Adrenal gland (tissue), 19 donors: ENCODE measurements at regions of chr1 and their contacts with region 1.

Region 1: GRCh38 chr1:46132529-46133180 is at the start of gene PIK3R3:
- DNase-seq: peak; percentile 98 to 99 (median 99)
- H3K4me3 ChIP-seq: peak within 1 kb of the TSS in 3 of 4 donors; percentile 69 to 77 (median 75)
- H3K27ac ChIP-seq: peak within 1 kb of the TSS; percentile 95 to 98 (median 97)
- H3K4me1 ChIP-seq: peaks cover 24 to 49% of the 10 kb centered on the region in 2 donors
- H3K27me3 ChIP-seq: no peaks in the 10 kb centered on the region
- CTCF ChIP-seq: peak in 3 of 6 experiments; percentile 20 to 25 (median 22)
- POLR2A ChIP-seq: peak; percentile 99 to 100
- total RNA-seq, gene PIK3R3: 6.5 to 47.3 (median 21.5) TPM

Region 2: DNA sequence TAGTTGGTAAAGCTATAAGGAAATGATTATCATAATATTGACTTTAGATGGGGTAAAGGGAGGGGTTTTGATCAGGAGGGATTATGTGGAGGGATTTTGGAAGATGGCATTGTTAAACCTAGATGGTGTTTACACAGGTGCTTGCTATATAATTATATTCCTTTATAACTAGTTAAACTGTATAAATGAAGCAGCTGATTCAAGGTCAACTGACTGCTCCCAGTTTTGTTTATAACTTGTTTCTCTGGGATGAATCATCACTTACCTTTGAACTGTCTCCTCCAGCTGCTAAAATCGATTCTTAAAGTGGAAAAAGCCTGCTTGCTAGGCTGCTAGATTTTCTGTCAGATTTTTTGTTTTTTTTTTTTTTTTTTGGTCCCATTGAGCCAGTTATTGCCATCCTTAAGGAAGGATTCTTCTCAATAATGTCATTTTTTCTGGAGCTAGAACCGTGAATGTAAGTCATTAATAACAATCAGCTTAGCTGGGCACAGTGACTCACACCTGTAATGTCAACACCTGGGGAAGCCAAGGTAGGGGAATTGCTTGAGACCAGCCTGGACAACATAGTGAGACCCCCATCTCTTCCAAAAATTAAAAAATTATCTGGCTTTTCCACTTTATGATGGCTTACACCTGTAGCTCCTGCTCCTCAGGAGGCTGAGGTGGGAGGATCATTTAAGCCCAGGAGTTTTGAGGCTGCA is 153.4 kb before region 1 on chr1:
- intact Hi-C with region 1: no loop called
- DNase-seq: no peak
- H3K4me3 ChIP-seq: no peak overlapping the region
- H3K27ac ChIP-seq: peak overlapping the region in 3 of 5 donors; percentile 16 to 47 (median 42)
- H3K4me1 ChIP-seq: peaks cover 0 to 7% of the 10 kb centered on the region in 2 donors
- H3K27me3 ChIP-seq: no peaks in the 10 kb centered on the region
- CTCF ChIP-seq: no peak
- POLR2A ChIP-seq: no peak

Region 3: DNA sequence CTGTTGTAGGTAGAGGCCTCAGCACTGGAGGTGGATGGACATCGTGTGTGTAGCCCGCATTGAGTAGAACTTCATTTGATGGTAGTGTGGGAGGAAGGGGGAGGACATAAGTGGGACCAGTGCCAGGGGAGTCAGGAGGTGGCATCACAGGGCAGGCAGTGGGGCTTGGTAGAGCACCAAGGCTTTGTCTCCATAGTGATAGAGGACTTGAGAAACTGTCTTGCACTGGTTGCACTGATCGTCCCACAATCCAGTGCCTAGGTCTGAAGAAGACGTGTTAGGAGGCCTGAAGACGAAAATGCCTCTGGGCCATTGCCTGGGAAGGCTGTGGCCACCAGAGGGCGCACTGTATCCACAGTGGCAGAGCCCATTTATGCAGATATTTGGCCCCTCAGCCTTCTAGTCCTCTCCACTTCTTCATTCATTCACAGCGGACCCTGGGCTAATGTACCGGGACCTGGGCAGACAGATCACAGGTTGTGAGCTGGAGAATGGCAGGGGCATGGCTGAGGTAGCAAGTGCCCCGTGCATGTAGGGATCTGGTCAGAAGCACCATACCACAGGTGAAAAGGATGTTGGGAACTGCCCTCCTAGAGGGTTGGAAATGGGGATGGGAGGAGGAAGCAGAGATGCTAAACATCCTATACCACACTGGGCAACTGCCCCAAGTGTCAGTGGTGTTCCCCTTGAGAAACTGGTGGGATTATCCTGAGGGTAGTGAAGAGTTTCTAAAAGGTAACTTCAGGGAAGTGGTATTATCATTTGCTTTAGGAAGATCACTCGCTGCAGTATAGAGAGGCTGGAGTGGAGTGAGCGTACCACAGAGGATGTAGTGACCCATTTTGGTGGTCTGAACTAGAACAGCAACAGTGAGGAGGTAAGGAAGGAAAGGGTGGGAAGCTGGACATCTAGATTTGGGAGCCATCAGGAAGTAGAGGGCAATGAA is 95.5 kb before region 1 on chr1:
- intact Hi-C with region 1: loop called in 1 of 2 experiments (anchors 5 kb)
- DNase-seq: peak; percentile 78 to 97 (median 90)
- H3K4me3 ChIP-seq: no peak overlapping the region
- H3K27ac ChIP-seq: no peak overlapping the region
- H3K4me1 ChIP-seq: peaks cover 13 to 25% of the 10 kb centered on the region in 2 donors
- H3K27me3 ChIP-seq: no peaks in the 10 kb centered on the region
- CTCF ChIP-seq: peak; percentile 95 to 99 (median 98)
- POLR2A ChIP-seq: no peak

Region 4: DNA sequence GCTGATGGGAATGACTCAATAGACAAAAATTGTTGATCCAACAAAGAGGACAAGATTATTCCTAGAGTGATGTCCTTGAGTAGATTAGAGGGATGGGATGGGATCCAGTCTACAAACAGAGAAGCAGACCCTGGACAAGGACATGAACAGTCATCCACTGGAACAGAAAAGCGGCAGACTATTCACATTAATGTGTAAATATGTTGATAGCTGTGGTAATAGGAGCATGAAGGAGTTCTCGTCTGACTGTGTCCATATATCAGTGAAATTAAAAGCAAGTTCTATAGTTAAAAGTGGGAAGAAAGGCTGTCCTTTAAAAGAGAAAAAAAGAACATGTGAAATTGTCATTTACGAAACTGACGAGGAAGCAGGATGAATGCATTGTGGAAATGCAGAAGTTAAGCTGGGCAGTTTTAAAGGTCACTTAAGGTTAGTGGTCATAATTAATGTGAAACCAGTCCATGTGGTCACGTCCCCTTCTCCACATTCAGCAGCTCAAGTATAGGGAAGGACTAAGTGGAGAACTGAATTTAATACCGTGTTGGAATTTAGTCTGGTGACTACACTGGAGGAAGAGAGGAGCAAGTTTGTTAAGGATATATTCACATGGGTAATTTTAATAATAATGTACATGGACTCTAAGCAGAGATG is 62.4 kb before region 1 on chr1:
- intact Hi-C with region 1: loop called in 1 of 2 experiments (anchors 10 kb)
- DNase-seq: peak in 3 of 7 donors; percentile 28 to 38 (median 33)
- H3K4me3 ChIP-seq: peak overlapping the region in 1 of 4 donors; percentile 28
- H3K27ac ChIP-seq: peak overlapping the region in 4 of 5 donors; percentile 13 to 52 (median 24)
- H3K4me1 ChIP-seq: peaks cover 18 to 24% of the 10 kb centered on the region in 2 donors
- H3K27me3 ChIP-seq: no peaks in the 10 kb centered on the region
- CTCF ChIP-seq: no peak
- POLR2A ChIP-seq: no peak

Region 5: DNA sequence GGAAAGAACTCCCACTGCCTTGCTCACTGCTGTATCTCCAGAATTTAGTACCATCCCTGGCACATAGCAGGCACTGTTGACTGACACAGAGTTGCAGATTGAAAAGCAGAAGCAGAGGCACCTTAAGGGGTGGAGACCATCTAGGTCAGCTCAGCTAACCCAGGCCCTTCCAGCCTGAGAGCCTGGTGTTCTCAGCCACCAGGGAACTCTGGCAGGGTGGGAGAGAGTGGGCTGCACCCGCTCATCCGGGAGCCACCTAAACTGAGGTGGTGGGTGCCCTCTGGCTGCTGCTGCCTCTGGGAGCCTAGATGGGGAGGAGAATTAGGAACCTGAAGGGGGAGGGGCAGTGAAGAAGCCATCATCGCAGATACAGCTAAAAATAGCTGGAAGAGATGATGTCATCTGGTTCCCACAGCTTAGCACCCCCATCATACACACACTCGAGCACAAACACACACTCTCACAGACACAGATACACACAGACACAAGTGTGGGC is 40.8 kb after region 1 on chr1:
- intact Hi-C with region 1: loop called in 1 of 2 experiments (anchors 5 kb)
- DNase-seq: no peak
- H3K4me3 ChIP-seq: no peak overlapping the region
- H3K27ac ChIP-seq: peak overlapping the region in 1 of 5 donors; percentile 92
- H3K4me1 ChIP-seq: peaks cover 24 to 43% of the 10 kb centered on the region in 2 donors
- H3K27me3 ChIP-seq: no peaks in the 10 kb centered on the region
- CTCF ChIP-seq: no peak
- POLR2A ChIP-seq: no peak

Region 6: DNA sequence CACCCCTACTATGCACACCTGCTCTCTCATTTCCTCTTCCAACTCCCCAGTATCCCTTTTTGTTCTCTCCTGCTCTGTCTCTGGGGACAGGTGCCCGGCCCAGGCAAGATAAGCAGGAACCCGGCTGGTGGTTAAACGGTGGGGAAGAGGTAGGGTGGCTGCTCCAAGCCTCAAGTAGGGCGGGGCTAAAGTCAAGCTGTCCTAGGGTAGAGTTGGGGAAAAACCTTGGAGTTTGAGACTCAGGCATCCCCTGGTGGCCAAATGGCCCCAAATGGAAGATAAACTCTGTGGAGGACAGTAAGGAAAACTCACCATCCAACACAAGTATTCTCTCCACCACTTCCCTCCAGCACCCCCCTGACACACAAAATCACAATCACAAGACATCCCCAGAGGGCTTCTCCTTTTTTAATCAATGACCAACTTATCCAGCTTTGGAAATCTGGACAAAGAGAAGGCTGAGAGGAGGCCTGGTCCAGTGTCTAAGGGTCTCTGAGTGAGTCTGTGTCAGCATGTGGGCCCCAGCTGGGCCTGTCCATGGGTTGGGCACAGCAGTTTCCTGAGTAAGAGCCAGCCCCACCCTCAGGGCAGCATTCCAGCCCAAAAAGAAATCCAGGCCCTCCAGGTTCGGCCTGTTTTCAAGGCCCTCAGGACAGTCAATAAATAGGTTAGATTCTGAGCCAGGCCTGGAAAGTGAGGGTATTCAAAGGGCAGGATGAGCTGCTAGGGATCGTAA is 55.8 kb after region 1 on chr1:
- intact Hi-C with region 1: no loop called
- DNase-seq: no peak
- H3K4me3 ChIP-seq: no peak overlapping the region
- H3K27ac ChIP-seq: peak overlapping the region in 1 of 5 donors; percentile 1
- H3K4me1 ChIP-seq: peaks cover 2 to 6% of the 10 kb centered on the region in 2 donors
- H3K27me3 ChIP-seq: no peaks in the 10 kb centered on the region
- CTCF ChIP-seq: no peak
- POLR2A ChIP-seq: no peak